CD8-positive, alpha-beta T cell (primary cell): ENCODE measurements at regions of chr3 and their contacts with region 1.

Region 1: DNA sequence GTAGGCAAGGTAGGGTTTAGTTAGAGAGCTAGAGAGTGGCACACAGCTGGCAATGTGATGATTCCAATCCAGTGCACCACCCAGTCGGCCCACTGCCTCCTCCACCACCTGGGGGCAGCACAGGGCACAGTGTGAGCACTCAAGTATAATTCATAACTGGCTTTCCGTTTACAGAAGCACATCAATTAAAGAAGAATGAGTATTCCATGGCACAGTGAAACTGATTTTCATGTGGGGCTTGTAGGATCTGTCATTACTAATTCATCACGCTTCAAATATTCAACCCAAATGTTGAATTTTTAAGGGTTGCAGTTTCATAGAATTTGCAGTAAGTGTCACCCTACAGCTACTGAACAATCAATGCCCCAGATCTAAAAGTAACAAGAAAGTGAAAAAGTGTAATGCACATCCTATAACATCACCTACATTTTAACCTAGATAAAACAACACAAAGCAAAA is 149.9 kb downstream of the IGSF11 start:
- DNase-seq: peak; percentile 50 to 85 (median 76)
- ATAC-seq: peak; percentile 86
- H3K4me3 ChIP-seq: no peak overlapping the region
- H3K4me3 Mint-ChIP-seq: no peak overlapping the region
- H3K27ac ChIP-seq: no peak overlapping the region
- H3K27ac Mint-ChIP-seq: no peak overlapping the region
- H3K4me1 ChIP-seq: no peaks in the 10 kb centered on the region
- H3K4me1 Mint-ChIP-seq: peaks cover 7% of the 10 kb centered on the region
- H3K27me3 ChIP-seq: peaks cover 0 to 3% of the 10 kb centered on the region in 2 experiments
- H3K27me3 Mint-ChIP-seq: peaks cover 21% of the 10 kb centered on the region
- CTCF ChIP-seq: peak; percentile 99

Region 2: GRCh38 chr3:118436697-118437262 is 448.0 kb before region 1 on chr3:
- CTCF ChIA-PET with region 1: no interaction called
- POLR2A ChIA-PET with region 1: no interaction called
- intact Hi-C with region 1: no loop called
- DNase-seq: no peak
- ATAC-seq: no peak
- H3K4me3 ChIP-seq: no peak overlapping the region
- H3K4me3 Mint-ChIP-seq: no peak overlapping the region
- H3K27ac ChIP-seq: no peak overlapping the region
- H3K27ac Mint-ChIP-seq: no peak overlapping the region
- H3K4me1 ChIP-seq: no peaks in the 10 kb centered on the region
- H3K4me1 Mint-ChIP-seq: no peaks in the 10 kb centered on the region
- H3K27me3 ChIP-seq: no peaks in the 10 kb centered on the region
- H3K27me3 Mint-ChIP-seq: no peaks in the 10 kb centered on the region
- CTCF ChIP-seq: no peak

Region 3: DNA sequence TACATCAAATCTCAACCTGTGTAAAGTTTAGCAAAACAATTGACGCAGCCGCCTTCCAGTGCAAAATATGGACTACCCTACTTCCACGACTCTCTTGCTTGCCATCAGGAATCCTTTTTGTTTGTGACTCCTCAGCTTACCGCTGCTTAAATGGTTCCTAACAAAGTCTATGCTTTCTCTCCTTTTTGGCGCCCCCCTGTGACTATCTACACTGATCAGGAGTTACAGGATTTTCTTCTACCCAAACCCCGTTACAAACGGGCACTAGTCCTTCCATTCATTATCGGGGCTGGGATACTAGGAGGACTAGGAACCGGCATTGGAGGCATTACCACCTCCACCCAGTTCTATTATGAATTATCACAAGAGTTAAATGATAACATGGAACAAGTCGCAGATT is 34.1 kb before region 1 on chr3:
- CTCF ChIA-PET with region 1: interaction called, 11 read pairs
- POLR2A ChIA-PET with region 1: no interaction called
- intact Hi-C with region 1: no loop called
- DNase-seq: no peak
- ATAC-seq: no peak
- H3K4me3 ChIP-seq: no peak overlapping the region
- H3K4me3 Mint-ChIP-seq: no peak overlapping the region
- H3K27ac ChIP-seq: no peak overlapping the region
- H3K27ac Mint-ChIP-seq: no peak overlapping the region
- H3K4me1 ChIP-seq: no peaks in the 10 kb centered on the region
- H3K4me1 Mint-ChIP-seq: peaks cover 2% of the 10 kb centered on the region
- H3K27me3 ChIP-seq: no peaks in the 10 kb centered on the region
- H3K27me3 Mint-ChIP-seq: no peaks in the 10 kb centered on the region
- CTCF ChIP-seq: no peak

Region 4: GRCh38 chr3:118943597-118943996 is 58.8 kb after region 1 on chr3:
- CTCF ChIA-PET with region 1: interaction called, 18 read pairs
- POLR2A ChIA-PET with region 1: no interaction called
- intact Hi-C with region 1: loop called in 1 of 2 experiments (anchors 10 kb)
- DNase-seq: no peak
- ATAC-seq: no peak
- H3K4me3 ChIP-seq: no peak overlapping the region
- H3K4me3 Mint-ChIP-seq: no peak overlapping the region
- H3K27ac ChIP-seq: no peak overlapping the region
- H3K27ac Mint-ChIP-seq: no peak overlapping the region
- H3K4me1 ChIP-seq: peaks cover 35% of the 10 kb centered on the region
- H3K4me1 Mint-ChIP-seq: peaks cover 52% of the 10 kb centered on the region
- H3K27me3 ChIP-seq: no peaks in the 10 kb centered on the region
- H3K27me3 Mint-ChIP-seq: no peaks in the 10 kb centered on the region
- CTCF ChIP-seq: no peak

Region 5: GRCh38 chr3:119018690-119019463 is 134.1 kb after region 1 on chr3:
- CTCF ChIA-PET with region 1: interaction called, 46 read pairs
- POLR2A ChIA-PET with region 1: no interaction called
- intact Hi-C with region 1: no loop called
- DNase-seq: no peak
- ATAC-seq: no peak
- H3K4me3 ChIP-seq: no peak overlapping the region
- H3K4me3 Mint-ChIP-seq: no peak overlapping the region
- H3K27ac ChIP-seq: no peak overlapping the region
- H3K27ac Mint-ChIP-seq: no peak overlapping the region
- H3K4me1 ChIP-seq: peaks cover 6% of the 10 kb centered on the region
- H3K4me1 Mint-ChIP-seq: peaks cover 16% of the 10 kb centered on the region
- H3K27me3 ChIP-seq: no peaks in the 10 kb centered on the region
- H3K27me3 Mint-ChIP-seq: no peaks in the 10 kb centered on the region
- CTCF ChIP-seq: no peak

Region 6: GRCh38 chr3:119042164-119042563 is 157.4 kb after region 1 on chr3:
- CTCF ChIA-PET with region 1: interaction called, 362 read pairs
- POLR2A ChIA-PET with region 1: interaction called, 4 read pairs
- intact Hi-C with region 1: no loop called
- DNase-seq: no peak
- ATAC-seq: no peak
- H3K4me3 ChIP-seq: no peak overlapping the region
- H3K4me3 Mint-ChIP-seq: no peak overlapping the region
- H3K27ac ChIP-seq: no peak overlapping the region
- H3K27ac Mint-ChIP-seq: no peak overlapping the region
- H3K4me1 ChIP-seq: no peaks in the 10 kb centered on the region
- H3K4me1 Mint-ChIP-seq: no peaks in the 10 kb centered on the region
- H3K27me3 ChIP-seq: no peaks in the 10 kb centered on the region
- H3K27me3 Mint-ChIP-seq: peaks cover 35% of the 10 kb centered on the region
- CTCF ChIP-seq: no peak

Region 7: GRCh38 chr3:119104031-119104430 is 219.3 kb after region 1 on chr3:
- CTCF ChIA-PET with region 1: interaction called, 310 read pairs
- POLR2A ChIA-PET with region 1: interaction called, 6 read pairs
- intact Hi-C with region 1: no loop called
- DNase-seq: no peak
- ATAC-seq: no peak
- H3K4me3 ChIP-seq: no peak overlapping the region
- H3K4me3 Mint-ChIP-seq: no peak overlapping the region
- H3K27ac ChIP-seq: no peak overlapping the region
- H3K27ac Mint-ChIP-seq: no peak overlapping the region
- H3K4me1 ChIP-seq: no peaks in the 10 kb centered on the region
- H3K4me1 Mint-ChIP-seq: no peaks in the 10 kb centered on the region
- H3K27me3 ChIP-seq: no peaks in the 10 kb centered on the region
- H3K27me3 Mint-ChIP-seq: peaks cover 5% of the 10 kb centered on the region
- CTCF ChIP-seq: no peak

Region 8: GRCh38 chr3:119559441-119559963 is 674.7 kb after region 1 on chr3 and contains the start of gene CD80:
- CTCF ChIA-PET with region 1: interaction called, 3 read pairs
- POLR2A ChIA-PET with region 1: no interaction called
- intact Hi-C with region 1: loop called in 1 of 2 experiments (anchors 5 kb)
- DNase-seq: peak in 8 of 9 experiments; percentile 20 to 72 (median 51)
- ATAC-seq: peak; percentile 43
- H3K4me3 ChIP-seq: peak within 1 kb of the TSS in 1 of 2 experiments; percentile 7
- H3K4me3 Mint-ChIP-seq: peak within 1 kb of the TSS; percentile 13
- H3K27ac ChIP-seq: no peak within 1 kb of the TSS
- H3K27ac Mint-ChIP-seq: no peak within 1 kb of the TSS
- H3K4me1 ChIP-seq: no peaks in the 10 kb centered on the region
- H3K4me1 Mint-ChIP-seq: peaks cover 12% of the 10 kb centered on the region
- H3K27me3 ChIP-seq: peaks cover 0 to 2% of the 10 kb centered on the region in 2 experiments
- H3K27me3 Mint-ChIP-seq: no peaks in the 10 kb centered on the region
- CTCF ChIP-seq: peak; percentile 15
- total RNA-seq, gene CD80: 0.58 to 0.71 TPM